AG04449 (cell line): ENCODE measurements at regions of chr20 and their contacts with region 1.

Region 1: DNA sequence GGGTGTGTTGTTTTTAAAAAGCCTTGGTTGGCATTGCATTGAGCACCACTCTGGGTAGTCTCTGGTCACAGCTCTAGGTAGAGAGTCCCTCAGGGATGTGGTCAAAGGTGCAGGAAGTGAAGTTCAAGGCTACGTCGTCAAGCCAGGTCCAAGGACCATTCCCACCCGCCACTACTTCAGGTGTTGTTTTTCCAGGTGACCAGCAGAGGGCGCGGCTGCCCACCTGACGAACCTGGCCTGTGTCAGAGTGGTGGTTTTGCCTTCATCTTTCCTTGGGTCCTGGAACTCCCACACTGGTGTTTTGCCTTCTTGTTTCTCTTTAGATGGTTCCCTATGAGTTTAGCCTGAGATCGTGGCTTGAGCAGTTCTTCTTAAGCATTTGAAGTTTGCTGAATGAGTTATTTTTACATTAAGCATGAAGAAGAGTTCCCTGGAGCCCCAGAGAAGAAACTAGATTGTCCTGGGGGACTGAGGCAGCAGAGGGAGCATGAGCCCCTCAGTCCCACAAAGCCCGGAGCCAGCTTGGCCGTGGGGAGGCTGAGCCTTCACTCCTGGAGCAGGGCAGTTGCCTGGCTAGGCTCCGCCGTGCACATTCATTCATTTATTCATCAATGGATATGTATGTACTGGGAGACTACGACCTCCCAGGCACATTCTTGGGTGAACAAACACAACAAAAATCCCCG is 5.6 kb upstream of the PHACTR3 start:
- DNase-seq: no peak
- H3K4me3 ChIP-seq: no peak overlapping the region
- CTCF ChIP-seq: peak; percentile 74

Region 2: DNA sequence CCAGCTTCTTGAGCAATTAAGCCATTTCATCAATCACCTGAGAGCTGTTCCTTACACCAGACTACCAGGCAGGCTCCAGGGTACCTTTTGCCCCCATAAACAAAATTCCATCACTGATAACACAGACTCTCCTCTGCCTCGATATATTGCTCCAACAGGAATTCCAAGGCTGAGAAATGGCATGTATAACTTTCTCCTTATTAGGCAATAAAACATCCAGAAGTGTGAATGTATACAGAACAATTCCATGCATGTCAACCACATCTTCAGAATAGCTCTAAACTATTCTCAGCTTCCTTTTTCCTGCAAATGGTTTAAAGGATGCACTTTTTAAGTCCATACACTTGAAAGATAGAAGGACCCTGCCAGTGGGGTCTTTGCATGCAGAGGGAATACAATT is 224.5 kb before region 1 on chr20:
- CTCF ChIA-PET with region 1: no interaction called
- POLR2A ChIA-PET with region 1: no interaction called
- DNase-seq: no peak
- H3K4me3 ChIP-seq: no peak overlapping the region
- CTCF ChIP-seq: no peak

Region 3: DNA sequence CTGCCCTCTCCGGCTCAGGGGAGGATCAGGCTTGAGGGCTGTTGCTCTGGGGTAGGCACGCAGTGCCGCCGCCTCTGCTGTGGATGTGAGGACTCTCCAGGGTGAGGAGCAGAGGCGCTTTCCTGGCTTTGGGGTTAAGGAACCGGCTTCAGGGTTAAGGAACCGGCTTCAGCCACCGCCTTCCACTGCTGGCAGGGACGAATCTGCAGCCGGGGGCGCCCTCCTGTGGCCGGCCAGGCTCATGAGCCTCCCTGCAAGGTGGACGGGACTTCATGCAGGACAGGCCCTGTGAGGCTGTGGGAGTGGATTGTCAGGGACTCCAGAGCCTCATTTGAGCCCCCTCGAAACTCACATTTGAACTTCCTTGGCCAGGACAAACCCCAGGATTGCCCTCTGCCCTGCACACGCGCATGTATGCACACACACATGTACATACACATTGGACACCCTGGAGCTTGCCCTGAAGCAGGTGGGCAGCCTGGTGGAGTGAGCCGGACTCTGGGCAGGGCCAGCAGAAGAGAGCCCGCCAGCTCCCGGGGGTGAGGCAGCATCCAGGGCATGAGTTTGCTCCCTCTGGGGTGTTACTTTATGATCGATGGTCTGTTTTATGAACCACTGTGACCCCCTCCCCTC is 152.4 kb after region 1 on chr20:
- CTCF ChIA-PET with region 1: interaction called, 74 read pairs
- POLR2A ChIA-PET with region 1: no interaction called
- DNase-seq: peak; percentile 9
- H3K4me3 ChIP-seq: no peak overlapping the region
- CTCF ChIP-seq: peak; percentile 95